GM12878 (cell line): ENCODE measurements at regions of chr1 and their contacts with region 1.

Region 1: GRCh38 chr1:221741711-221742554 is at the start of gene DUSP10:
- DNase-seq: peak; percentile 97
- ATAC-seq: peak; percentile 75
- H3K4me3 ChIP-seq: peak within 1 kb of the TSS; percentile 90
- H3K27ac ChIP-seq: peak within 1 kb of the TSS; percentile 89
- H3K4me1 ChIP-seq: peaks cover 19% of the 10 kb centered on the region
- H3K27me3 ChIP-seq: no peaks in the 10 kb centered on the region
- CTCF ChIP-seq: peak in 2 of 3 experiments; percentile 9 to 46; a peak in 2 of 6 replicates
- EP300 ChIP-seq: no peak
- POLR2A ChIP-seq: peak; percentile 72
- RAD21 ChIP-seq: peak; percentile 47
- polyA plus RNA-seq, gene DUSP10: 20.3 to 32.1 TPM

Region 2: DNA sequence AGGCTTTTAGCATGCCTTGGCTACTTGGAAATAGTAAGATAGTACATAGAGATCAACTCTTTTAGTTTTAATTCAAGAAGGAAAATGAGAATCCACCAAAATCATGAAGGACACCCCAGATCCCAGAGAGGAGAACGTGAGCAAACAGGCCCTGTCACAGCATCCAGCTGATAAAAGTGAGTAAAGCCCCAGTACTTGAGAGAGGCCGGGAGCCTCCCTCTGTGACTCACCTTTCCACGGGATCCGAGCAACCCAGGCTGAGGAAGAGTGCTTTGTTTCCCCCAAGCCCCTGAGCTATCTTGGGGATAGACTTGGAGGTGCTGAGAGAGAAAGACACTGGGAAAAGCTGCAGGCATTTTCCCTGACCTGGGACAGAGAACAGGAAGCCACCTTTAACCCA is 238.7 kb before region 1 on chr1:
- CTCF ChIA-PET with region 1: no interaction called
- POLR2A ChIA-PET with region 1: no interaction called
- RAD21 ChIA-PET with region 1: no interaction called
- SMC1A ChIA-PET with region 1: no interaction called
- in situ Hi-C with region 1: no loop called
- intact Hi-C with region 1: no loop called
- DNase-seq: no peak
- ATAC-seq: no peak
- H3K4me3 ChIP-seq: no peak overlapping the region
- H3K27ac ChIP-seq: no peak overlapping the region
- H3K4me1 ChIP-seq: no peaks in the 10 kb centered on the region
- H3K27me3 ChIP-seq: no peaks in the 10 kb centered on the region
- CTCF ChIP-seq: no peak
- EP300 ChIP-seq: no peak
- POLR2A ChIP-seq: no peak
- RAD21 ChIP-seq: no peak

Region 3: GRCh38 chr1:221543529-221544120 is 198.3 kb before region 1 on chr1:
- CTCF ChIA-PET with region 1: interaction called, 45 read pairs
- POLR2A ChIA-PET with region 1: interaction called, 5 read pairs
- RAD21 ChIA-PET with region 1: interaction called, 50 read pairs
- SMC1A ChIA-PET with region 1: interaction called, 52 read pairs
- in situ Hi-C with region 1: no loop called
- intact Hi-C with region 1: loop called (anchors 2 kb)
- DNase-seq: no peak
- ATAC-seq: peak; percentile 64
- H3K4me3 ChIP-seq: no peak overlapping the region
- H3K27ac ChIP-seq: no peak overlapping the region
- H3K4me1 ChIP-seq: no peaks in the 10 kb centered on the region
- H3K27me3 ChIP-seq: no peaks in the 10 kb centered on the region
- CTCF ChIP-seq: peak; percentile 39 to 57 (median 53); a peak in 5 of 6 replicates
- EP300 ChIP-seq: no peak
- POLR2A ChIP-seq: no peak
- RAD21 ChIP-seq: peak; percentile 66

Region 4: GRCh38 chr1:221708987-221709386 is 32.9 kb before region 1 on chr1:
- CTCF ChIA-PET with region 1: interaction called, 24 read pairs
- POLR2A ChIA-PET with region 1: interaction called, 52 read pairs
- RAD21 ChIA-PET with region 1: interaction called, 235 read pairs
- SMC1A ChIA-PET with region 1: interaction called, 188 read pairs
- in situ Hi-C with region 1: no loop called
- intact Hi-C with region 1: loop called (anchors 2 kb)
- DNase-seq: no peak
- ATAC-seq: peak; percentile 74
- H3K4me3 ChIP-seq: no peak overlapping the region
- H3K27ac ChIP-seq: peak overlapping the region; percentile 81
- H3K4me1 ChIP-seq: peaks cover 51% of the 10 kb centered on the region
- H3K27me3 ChIP-seq: no peaks in the 10 kb centered on the region
- CTCF ChIP-seq: no peak
- EP300 ChIP-seq: peak; percentile 76 to 97
- POLR2A ChIP-seq: no peak
- RAD21 ChIP-seq: no peak; the same call in 1 of the 2 replicates

Region 5: GRCh38 chr1:221761354-221762002 is 19.5 kb after region 1 on chr1:
- CTCF ChIA-PET with region 1: interaction called, 13 read pairs
- POLR2A ChIA-PET with region 1: interaction called, 99 read pairs
- RAD21 ChIA-PET with region 1: interaction called, 189 read pairs
- SMC1A ChIA-PET with region 1: interaction called, 211 read pairs
- in situ Hi-C with region 1: no loop called
- intact Hi-C with region 1: no loop called
- DNase-seq: peak; percentile 91
- ATAC-seq: peak; percentile 80
- H3K4me3 ChIP-seq: peak overlapping the region; percentile 26; the same call in 1 of the 2 replicates
- H3K27ac ChIP-seq: peak overlapping the region; percentile 90
- H3K4me1 ChIP-seq: peaks cover 64% of the 10 kb centered on the region
- H3K27me3 ChIP-seq: no peaks in the 10 kb centered on the region
- CTCF ChIP-seq: no peak
- EP300 ChIP-seq: peak in 1 of 2 experiments; percentile 13; a peak in 1 of 4 replicates
- POLR2A ChIP-seq: 0 out of 2 replicates have a peak, but pooled peaks have one; percentile 26
- RAD21 ChIP-seq: 0 out of 2 replicates have a peak, but pooled peaks have one; percentile 6

Region 6: DNA sequence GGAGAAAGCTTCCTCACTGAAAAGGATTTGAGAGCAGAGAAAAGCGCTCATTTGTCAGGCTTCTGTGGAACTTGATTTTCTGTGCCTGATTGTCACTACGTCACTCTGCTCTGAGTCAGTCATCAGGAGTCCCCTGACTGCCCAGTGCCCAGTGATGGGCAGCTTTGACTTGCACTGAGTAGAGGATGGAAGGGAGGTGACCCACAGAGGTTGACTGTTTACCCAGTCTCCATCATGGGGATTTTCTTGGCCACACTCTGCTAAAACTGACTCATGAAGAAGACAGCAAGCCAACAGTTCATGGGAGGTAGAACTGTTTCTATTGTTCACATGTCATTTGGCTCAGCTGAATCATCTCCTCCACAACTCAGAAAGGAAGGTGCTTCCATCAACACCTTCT is 82.1 kb after region 1 on chr1:
- CTCF ChIA-PET with region 1: interaction called, 3 read pairs
- POLR2A ChIA-PET with region 1: no interaction called
- RAD21 ChIA-PET with region 1: interaction called, 5 read pairs
- SMC1A ChIA-PET with region 1: interaction called, 4 read pairs
- in situ Hi-C with region 1: no loop called
- intact Hi-C with region 1: loop called (anchors 5 kb)
- DNase-seq: no peak
- ATAC-seq: peak; percentile 79
- H3K4me3 ChIP-seq: no peak overlapping the region
- H3K27ac ChIP-seq: peak overlapping the region; percentile 30; the same call in 1 of the 2 replicates
- H3K4me1 ChIP-seq: peaks cover 16% of the 10 kb centered on the region
- H3K27me3 ChIP-seq: no peaks in the 10 kb centered on the region
- CTCF ChIP-seq: no peak
- EP300 ChIP-seq: no peak
- POLR2A ChIP-seq: no peak
- RAD21 ChIP-seq: no peak

Region 7: DNA sequence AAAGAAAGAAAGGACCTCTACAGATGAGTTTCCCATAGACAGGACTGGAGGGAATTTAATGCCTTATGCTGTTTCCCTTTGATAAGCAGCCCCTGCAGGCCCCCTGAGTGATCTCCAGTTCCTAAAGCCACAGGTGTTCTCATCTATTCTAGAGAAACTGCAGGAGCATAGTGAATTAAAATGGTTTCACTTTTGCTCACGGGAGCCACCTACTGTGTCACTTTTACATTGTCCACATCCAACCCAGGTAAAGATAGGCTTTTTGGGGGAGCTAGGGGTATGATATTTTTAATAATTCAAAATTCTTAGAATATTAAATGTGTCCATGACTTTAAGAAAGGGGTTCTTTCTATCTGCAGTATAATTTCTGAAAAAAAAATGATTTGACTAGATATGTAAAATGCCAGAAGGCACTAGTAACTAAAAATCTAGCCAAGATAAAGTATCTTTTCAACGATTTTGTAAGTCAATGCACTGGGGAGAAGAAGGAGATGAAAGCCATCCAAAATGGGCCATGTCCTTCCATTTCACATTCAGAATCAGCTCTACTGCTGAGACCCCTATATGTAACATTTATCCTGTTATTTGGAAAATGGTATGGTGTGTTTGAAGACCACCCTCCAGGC is 267.3 kb after region 1 on chr1:
- CTCF ChIA-PET with region 1: interaction called, 10 read pairs
- POLR2A ChIA-PET with region 1: no interaction called
- RAD21 ChIA-PET with region 1: interaction called, 11 read pairs
- SMC1A ChIA-PET with region 1: interaction called, 23 read pairs
- in situ Hi-C with region 1: no loop called
- intact Hi-C with region 1: loop called (anchors 5 kb)
- DNase-seq: peak; percentile 36
- ATAC-seq: peak; percentile 95
- H3K4me3 ChIP-seq: no peak overlapping the region
- H3K27ac ChIP-seq: no peak overlapping the region
- H3K4me1 ChIP-seq: no peaks in the 10 kb centered on the region
- H3K27me3 ChIP-seq: no peaks in the 10 kb centered on the region
- CTCF ChIP-seq: peak; percentile 45 to 59 (median 48); a peak in 5 of 6 replicates
- EP300 ChIP-seq: no peak
- POLR2A ChIP-seq: no peak
- RAD21 ChIP-seq: peak; percentile 74

Region 8: GRCh38 chr1:222465211-222466041 is 723.5 kb after region 1 on chr1:
- CTCF ChIA-PET with region 1: no interaction called
- POLR2A ChIA-PET with region 1: no interaction called
- RAD21 ChIA-PET with region 1: no interaction called
- SMC1A ChIA-PET with region 1: no interaction called
- in situ Hi-C with region 1: no loop called
- intact Hi-C with region 1: no loop called
- DNase-seq: peak; percentile 57
- ATAC-seq: peak; percentile 98
- H3K4me3 ChIP-seq: peak overlapping the region; percentile 68; the same call in 1 of the 2 replicates
- H3K27ac ChIP-seq: peak overlapping the region; percentile 62
- H3K4me1 ChIP-seq: no peaks in the 10 kb centered on the region
- H3K27me3 ChIP-seq: peaks cover 2 to 5% of the 10 kb centered on the region in 2 experiments; a peak in 2 of 4 replicates
- CTCF ChIP-seq: peak; percentile 96 to 99 (median 96)
- EP300 ChIP-seq: no peak
- POLR2A ChIP-seq: peak; percentile 47; the same call in 1 of the 2 replicates
- RAD21 ChIP-seq: peak; percentile 73